CD14-positive monocyte (primary cell): ENCODE measurements at regions of chr4 and their contacts with region 1.

Region 1: DNA sequence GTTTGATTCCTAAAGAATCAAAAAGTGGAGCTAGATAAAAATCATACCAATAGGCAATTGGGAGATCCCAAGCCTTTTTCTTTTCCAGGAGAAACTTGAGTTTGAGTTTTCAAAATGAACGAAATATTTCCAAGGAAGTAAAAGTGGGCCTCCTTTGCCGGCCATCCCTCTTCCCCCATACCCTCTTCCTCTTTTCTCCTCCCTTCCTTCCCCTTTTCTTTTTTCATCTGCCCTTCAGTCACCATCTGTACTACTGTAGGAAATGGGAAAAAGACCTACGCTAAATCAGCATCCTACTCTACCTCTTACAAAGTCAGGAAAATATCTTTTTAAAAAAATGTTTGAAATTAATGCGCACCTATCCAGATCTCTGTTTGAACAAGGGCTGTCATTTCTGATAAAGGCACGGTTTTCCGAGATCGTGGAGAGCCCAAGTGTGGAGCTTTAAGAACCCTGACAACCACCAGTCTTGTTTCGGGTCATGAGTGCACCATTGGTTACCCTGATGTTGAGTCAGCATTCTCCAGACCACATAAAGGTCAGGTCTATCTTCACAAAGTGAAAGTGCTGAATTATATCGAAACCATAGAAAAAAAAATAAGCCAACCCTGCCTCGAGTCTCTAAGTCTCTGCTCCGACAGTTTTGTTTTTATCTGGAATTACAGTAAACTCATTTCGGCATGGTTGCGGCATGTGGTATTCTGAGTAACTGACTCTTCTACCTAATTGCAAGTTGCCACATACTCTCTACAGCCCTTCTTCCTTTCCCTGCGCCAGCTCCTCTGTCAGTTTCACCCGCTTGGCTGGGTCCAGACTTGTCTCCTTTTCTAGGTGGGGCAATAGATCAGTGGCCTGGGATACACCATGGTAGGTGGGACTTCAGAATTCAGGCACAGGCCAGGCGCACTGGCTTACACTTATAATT is 140.2 kb upstream of the KLF3 start:
- DNase-seq: peak; percentile 74 to 77 (median 76)
- H3K4me3 ChIP-seq: peak overlapping the region in 2 of 3 experiments; percentile 18 to 51
- H3K4me3 Mint-ChIP-seq: peak overlapping the region; percentile 59 to 79
- H3K27ac ChIP-seq: peak overlapping the region; percentile 74 to 92
- H3K27ac Mint-ChIP-seq: peak overlapping the region; percentile 96 to 98 (median 97)
- H3K4me1 ChIP-seq: peaks cover 64 to 85% of the 10 kb centered on the region in 2 donors
- H3K4me1 Mint-ChIP-seq: peaks cover 81% of the 10 kb centered on the region
- H3K27me3 ChIP-seq: no peaks in the 10 kb centered on the region
- H3K27me3 Mint-ChIP-seq: peaks cover 0 to 4% (median 0%) of the 10 kb centered on the region in 3 donors
- CTCF ChIP-seq: no peak

Region 2: DNA sequence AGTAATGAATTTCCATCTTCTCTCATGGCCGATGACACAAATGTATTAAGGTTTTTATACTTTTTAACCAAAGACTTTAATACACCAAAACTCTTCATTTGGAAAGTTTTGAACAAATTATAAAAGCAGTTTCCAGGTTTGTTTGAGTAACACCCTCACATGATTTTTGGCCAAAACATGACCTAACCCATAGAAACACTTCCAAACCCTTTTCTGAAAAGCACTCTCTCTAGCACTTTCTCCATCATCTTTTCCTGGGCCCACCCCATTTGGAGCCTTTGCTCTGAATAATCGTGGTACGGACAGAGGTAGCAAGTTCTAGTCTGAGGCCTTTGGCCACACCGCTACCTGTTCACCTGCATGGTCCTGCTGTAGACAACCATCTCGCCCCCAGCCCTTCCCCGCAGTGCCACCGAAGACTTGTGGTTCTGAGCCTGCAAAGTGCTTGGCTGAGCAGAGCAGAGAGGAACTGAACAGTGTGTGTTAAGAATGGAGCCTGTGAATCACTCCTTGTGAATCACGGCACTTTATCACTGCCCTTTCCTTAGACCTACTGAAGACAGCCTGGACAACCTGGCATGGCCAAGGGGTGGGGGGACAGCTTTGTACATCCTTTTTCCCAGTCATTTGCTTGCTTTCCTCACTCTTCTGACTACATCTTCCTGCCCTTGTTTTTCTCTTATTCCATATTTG is 381.8 kb before region 1 on chr4:
- intact Hi-C with region 1: no loop called
- DNase-seq: no peak
- H3K4me3 ChIP-seq: no peak overlapping the region
- H3K4me3 Mint-ChIP-seq: no peak overlapping the region
- H3K27ac ChIP-seq: no peak overlapping the region
- H3K27ac Mint-ChIP-seq: peak overlapping the region in 3 of 7 donors; percentile 22 to 83 (median 46)
- H3K4me1 ChIP-seq: no peaks in the 10 kb centered on the region
- H3K4me1 Mint-ChIP-seq: no peaks in the 10 kb centered on the region
- H3K27me3 ChIP-seq: no peaks in the 10 kb centered on the region
- H3K27me3 Mint-ChIP-seq: peaks cover 0 to 2% (median 1%) of the 10 kb centered on the region in 3 donors
- CTCF ChIP-seq: no peak

Region 3: DNA sequence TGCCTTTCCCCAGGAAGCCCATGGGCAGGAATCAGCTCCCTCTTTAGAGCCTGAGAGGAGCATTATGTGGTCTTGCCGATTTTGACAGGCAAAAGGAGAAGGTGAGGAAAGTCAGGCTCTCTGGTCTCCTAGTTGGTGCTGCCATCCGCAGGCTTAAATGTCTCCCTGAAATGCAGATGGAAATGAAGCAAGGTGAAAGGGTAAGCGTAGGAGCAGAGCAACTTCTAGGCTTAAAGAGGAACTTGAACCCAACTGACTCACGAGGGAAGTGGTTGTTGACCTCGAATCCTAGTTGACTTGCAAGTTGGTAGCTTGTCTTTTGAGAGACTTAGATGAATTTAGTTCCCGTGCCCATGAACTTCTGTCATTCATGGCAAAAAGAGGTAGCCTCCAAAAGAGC is 357.7 kb before region 1 on chr4:
- intact Hi-C with region 1: loop called in 1 of 2 experiments (anchors 5 kb)
- DNase-seq: peak; percentile 85 to 91 (median 91)
- H3K4me3 ChIP-seq: peak overlapping the region in 1 of 3 experiments; percentile 26
- H3K4me3 Mint-ChIP-seq: peak overlapping the region in 1 of 2 donors; percentile 54
- H3K27ac ChIP-seq: peak overlapping the region; percentile 46 to 69
- H3K27ac Mint-ChIP-seq: peak overlapping the region; percentile 87 to 96 (median 91)
- H3K4me1 ChIP-seq: peaks cover 29 to 31% of the 10 kb centered on the region in 2 donors
- H3K4me1 Mint-ChIP-seq: peaks cover 38% of the 10 kb centered on the region
- H3K27me3 ChIP-seq: no peaks in the 10 kb centered on the region
- H3K27me3 Mint-ChIP-seq: peaks cover 0 to 4% (median 3%) of the 10 kb centered on the region in 3 donors
- CTCF ChIP-seq: peak; percentile 33

Region 4: GRCh38 chr4:38482696-38483095 is 41.1 kb before region 1 on chr4:
- intact Hi-C with region 1: no loop called
- DNase-seq: no peak
- H3K4me3 ChIP-seq: no peak overlapping the region
- H3K4me3 Mint-ChIP-seq: no peak overlapping the region
- H3K27ac ChIP-seq: no peak overlapping the region
- H3K27ac Mint-ChIP-seq: no peak overlapping the region
- H3K4me1 ChIP-seq: no peaks in the 10 kb centered on the region
- H3K4me1 Mint-ChIP-seq: no peaks in the 10 kb centered on the region
- H3K27me3 ChIP-seq: no peaks in the 10 kb centered on the region
- H3K27me3 Mint-ChIP-seq: peaks cover 0 to 3% (median 2%) of the 10 kb centered on the region in 3 donors
- CTCF ChIP-seq: no peak

Region 5: DNA sequence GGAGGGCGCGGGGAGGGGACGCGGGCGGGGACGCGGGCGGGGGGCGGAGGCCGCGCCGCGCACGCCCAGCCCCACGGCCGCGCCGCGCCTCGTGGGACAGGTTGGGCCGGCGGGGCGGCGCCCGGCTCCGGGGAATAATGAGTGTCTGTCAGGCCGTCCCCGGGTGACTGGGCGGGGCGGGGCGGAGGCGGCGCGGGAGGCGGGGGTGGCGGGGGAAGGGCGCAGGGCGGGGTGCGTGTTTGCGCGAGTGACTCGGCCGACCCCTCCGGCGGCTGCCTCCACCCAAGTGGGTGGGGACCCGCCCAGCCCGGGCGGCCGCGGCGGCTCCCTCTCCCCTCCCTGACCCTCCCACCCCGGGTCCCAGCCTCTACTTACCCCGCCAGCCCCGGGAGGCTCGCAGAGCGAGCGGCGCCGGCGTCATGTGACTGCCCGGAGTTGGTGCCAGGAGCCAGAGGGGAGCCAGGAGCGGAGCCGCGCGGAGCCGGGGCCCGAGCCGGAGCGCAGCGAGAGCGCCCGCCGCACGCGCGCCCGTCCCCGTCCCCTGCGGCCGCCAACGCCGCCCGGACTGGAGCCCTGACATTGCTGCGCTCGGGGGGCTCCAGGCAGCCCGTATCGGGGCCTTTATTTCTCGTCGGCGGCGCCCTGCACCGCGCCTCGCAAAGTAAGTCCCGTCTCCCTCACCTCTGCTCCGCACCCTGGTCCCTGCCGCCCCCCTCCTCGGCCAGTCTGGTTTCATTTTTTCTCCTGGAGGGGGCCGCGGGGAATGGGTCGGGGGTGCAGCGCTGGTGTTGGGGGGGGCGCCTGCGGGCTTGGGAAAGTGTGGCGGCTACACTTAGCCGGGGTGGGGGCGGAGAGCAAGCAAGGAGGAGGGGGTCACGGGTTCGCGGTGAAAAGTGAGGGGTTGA is 140.3 kb after region 1 on chr4 and contains the start of gene KLF3:
- intact Hi-C with region 1: loop called (anchors 2 to 5 kb)
- DNase-seq: peak; percentile 87 to 90 (median 89)
- H3K4me3 ChIP-seq: peak within 1 kb of the TSS; percentile 84 to 98 (median 94)
- H3K4me3 Mint-ChIP-seq: peak within 1 kb of the TSS; percentile 99
- H3K27ac ChIP-seq: peak within 1 kb of the TSS; percentile 93 to 95
- H3K27ac Mint-ChIP-seq: peak within 1 kb of the TSS; percentile 90 to 97 (median 94)
- H3K4me1 ChIP-seq: peaks cover 43 to 55% of the 10 kb centered on the region in 2 donors
- H3K4me1 Mint-ChIP-seq: peaks cover 55% of the 10 kb centered on the region
- H3K27me3 ChIP-seq: no peaks in the 10 kb centered on the region
- H3K27me3 Mint-ChIP-seq: peaks cover 0 to 8% (median 1%) of the 10 kb centered on the region in 3 donors
- CTCF ChIP-seq: no peak
- polyA plus RNA-seq, gene KLF3: 46.3 to 95.7 (median 53.9) TPM